Prostate gland (tissue), 2 donors: ENCODE measurements at regions of chr7 and their contacts with region 1.

Region 1: DNA sequence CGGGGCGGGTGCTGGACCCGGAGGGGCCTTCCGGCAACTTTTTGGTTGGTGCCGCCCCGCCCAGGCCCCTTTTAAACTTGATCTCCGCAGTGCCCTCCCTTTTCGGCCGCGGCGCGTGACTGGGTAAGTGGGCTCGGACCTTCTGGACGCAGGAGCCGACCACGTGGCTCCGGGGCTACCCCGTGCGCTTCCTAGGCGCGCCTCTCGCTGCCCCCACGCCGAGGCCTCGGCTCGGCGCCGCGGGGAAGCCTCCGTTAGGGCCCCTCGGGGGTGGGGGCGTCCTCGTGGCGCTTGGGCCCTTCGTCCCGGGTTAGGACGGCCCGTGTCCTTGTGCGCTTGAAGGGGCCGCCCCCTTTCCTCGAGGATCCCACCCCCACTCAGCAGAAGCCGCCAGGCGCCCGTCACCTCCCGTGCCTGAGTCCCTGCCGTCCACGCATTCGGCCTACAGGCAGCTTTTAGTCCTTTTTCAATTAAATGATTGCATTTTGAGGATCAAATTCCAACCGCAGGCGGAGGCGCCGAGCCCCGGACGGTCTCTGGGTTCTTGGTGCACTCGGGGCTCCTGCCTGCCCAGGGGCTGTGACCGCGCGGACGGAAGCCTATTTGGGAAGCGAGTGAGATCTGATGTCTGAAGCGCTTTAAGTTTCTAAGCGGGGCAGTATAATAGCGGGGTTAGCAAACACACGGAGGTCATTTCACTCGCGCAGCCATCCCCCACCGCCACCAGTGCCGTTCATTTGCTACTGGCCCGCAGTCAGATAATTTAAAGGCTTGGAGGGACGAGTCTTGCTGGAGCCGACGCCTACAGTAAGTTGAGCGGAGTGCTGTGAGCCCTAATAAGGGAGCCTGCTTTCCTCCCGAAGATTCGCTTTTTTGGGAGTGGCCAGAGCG is 31.8 kb upstream of the TOMM7 start:
- DNase-seq: peak; percentile 63
- H3K4me3 ChIP-seq: peak overlapping the region; percentile 45 to 73
- H3K27ac ChIP-seq: peak overlapping the region; percentile 68 to 78
- H3K4me1 ChIP-seq: peaks cover 4% of the 10 kb centered on the region
- H3K27me3 ChIP-seq: no peaks in the 10 kb centered on the region
- CTCF ChIP-seq: peak in 2 of 4 experiments; percentile 50 to 53
- POLR2A ChIP-seq: no peak

Region 2: DNA sequence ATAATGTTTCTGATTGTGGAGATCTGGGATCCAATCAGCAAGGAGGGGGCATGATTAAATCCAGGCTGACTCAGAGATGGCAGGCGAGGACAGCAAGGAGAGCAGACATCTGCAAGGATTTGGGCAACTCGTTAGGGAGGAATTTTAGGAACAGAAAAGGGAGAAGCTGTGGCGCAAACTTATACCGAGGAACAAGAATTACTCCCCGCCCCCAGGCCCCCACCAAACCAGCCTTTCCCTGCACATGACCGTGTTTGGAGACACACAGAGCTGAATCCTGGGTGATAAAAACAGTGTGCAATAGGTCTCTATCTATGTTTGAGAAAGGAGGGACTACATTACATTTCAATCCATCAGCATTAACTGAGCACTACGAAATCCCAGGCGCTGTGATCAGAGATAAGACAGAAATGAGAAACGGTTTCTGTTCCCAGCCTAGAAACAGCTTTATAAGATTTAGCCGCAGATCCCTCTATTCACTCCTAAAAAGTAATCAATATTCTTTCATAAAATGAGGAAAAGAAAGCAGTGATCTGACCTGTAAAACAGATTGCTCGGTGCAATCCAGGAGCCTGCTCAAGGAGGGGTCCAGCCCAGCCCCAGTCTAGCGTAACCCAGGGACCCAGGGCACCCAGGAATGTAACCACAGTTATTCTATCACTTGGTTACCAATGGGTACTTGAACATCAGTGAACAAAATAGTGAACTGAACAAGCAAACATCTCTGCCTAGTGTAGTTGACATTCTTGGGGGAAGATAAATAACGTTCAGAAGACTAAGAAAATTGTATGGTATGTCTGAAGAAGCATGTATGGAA is 460.3 kb before region 1 on chr7:
- intact Hi-C with region 1: no loop called
- DNase-seq: no peak
- H3K4me3 ChIP-seq: no peak overlapping the region
- H3K27ac ChIP-seq: no peak overlapping the region
- H3K4me1 ChIP-seq: no peaks in the 10 kb centered on the region
- H3K27me3 ChIP-seq: no peaks in the 10 kb centered on the region
- CTCF ChIP-seq: no peak
- POLR2A ChIP-seq: no peak

Region 3: DNA sequence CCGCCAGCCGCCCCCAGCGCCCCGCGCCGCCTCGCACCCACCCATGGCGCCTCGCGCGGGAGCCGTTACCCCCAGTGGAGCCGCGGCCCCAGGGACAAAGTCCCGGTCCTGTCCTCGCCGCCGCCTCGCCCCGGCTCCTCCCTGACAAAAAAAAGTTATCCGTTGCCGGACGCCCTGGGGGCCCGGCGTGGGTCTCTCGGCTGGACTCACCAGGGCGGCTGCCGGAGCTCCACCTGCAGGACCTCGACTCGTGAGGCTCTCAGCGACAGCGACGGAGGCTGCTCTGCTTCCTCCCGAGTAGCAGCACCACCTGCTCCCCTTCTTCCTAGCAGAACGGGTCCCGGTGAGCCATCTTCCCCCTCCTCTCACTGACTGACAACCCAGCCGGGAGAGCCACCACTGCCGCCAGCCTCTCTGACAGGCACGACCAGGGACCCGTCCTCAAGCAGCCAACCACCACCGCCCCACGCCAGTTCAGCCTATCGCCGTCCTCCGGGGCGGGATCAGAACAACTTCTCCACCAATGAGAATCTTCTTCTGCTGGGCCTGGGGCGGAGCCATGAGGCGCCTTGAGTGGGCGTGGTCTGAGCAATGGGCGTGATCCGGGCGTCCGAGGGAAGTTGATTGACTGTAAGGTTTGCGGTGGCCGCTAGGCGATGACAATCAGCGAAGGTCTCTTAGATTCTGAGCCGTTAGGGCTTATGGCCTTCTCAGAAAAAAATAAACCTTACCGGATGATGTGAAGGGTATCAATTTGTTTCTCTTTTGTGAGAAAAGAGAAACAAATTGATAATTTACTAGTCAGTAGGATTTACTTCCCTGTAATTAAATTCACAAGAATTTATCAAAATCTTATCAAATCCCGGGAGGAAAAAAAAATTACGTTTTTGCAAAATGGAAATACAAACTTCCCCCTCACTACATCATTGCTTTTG is 159.6 kb after region 1 on chr7 and contains the start of gene HYCC1:
- intact Hi-C with region 1: loop called (anchors 5 kb)
- DNase-seq: peak; percentile 99
- H3K4me3 ChIP-seq: peak within 1 kb of the TSS; percentile 77 to 87
- H3K27ac ChIP-seq: peak within 1 kb of the TSS; percentile 57 to 63
- H3K4me1 ChIP-seq: no peaks in the 10 kb centered on the region
- H3K27me3 ChIP-seq: no peaks in the 10 kb centered on the region
- CTCF ChIP-seq: peak in 3 of 4 experiments; percentile 47 to 79 (median 79)
- POLR2A ChIP-seq: peak; percentile 98
- total RNA-seq, gene HYCC1: 15.7 to 18.3 TPM